Transverse colon (tissue), 4 donors: ENCODE measurements at regions of chr1 and their contacts with region 1.

Region 1: DNA sequence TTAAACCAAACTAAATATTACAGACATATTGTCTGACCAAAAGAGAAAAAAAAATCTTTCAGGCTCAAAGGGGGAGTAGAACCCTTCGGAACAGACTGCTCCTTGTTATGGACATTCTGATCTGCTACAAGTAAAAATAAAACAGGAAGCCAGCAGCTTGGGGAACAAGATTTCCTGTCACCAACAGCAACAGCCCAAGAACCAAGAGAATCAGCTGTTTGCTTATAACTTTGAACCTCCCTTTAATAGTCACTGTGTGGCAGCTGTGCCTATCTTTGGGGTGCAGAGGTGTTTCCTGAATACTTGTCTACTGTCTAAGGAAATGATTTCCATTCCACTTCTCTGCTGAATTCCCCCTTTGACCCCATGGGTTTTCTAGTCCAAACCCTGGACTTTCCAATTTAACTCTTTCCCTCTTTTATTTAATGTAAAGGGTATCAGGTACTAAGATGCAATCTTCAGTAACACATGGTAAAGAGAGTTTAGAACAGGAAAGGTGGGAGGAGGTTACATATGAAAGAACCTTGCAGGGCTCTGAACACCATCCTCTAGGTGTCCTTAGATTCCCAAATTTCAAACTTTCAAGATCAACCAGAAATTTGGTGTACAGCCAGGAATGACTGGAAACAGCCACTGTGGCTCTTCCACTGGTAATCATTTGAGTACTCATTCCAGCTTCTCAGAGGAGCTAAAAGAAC is 38.6 kb downstream of the GPR3 start:
- DNase-seq: no peak
- H3K4me3 ChIP-seq: peak overlapping the region in 1 of 4 donors; percentile 7
- H3K27ac ChIP-seq: peak overlapping the region; percentile 63 to 79 (median 74)
- H3K4me1 ChIP-seq: peaks cover 59 to 90% (median 64%) of the 10 kb centered on the region in 4 donors
- H3K27me3 ChIP-seq: no peaks in the 10 kb centered on the region
- CTCF ChIP-seq: no peak
- EP300 ChIP-seq: no peak
- POLR2A ChIP-seq: no peak

Region 2: DNA sequence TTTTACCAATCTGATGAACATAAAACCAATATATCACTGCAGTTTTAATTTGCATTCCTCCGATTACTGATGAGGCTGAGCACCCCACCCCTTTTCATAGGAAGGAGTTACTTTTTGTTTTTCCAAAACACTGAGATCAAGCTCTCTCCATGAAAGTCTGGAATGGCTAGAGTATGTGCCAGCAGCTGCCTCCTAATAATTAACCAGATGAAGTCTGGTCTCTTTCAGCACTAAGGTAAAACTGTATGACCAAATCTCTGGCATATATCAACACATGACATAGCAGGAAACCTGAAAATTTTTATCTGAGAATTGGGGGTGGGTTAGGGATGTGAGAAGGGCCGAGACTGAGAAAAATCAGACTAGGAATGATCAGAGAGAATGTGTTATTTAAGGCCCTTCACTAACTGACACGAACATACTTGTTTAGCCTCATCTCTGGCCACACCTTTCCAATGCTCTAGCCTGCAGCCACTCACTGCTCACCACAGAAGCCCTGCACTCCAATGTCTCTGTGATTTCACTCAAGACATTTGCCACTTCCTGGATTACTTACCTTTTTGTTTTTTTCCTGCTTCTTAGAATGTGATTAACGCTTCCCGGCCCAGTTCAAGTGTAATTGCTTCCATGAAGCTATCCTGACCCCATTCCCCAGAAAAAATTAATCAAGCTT is 24.2 kb after region 1 on chr1:
- in situ Hi-C with region 1: no loop called
- intact Hi-C with region 1: loop called (anchors 1 kb)
- DNase-seq: peak; percentile 18
- H3K4me3 ChIP-seq: no peak overlapping the region
- H3K27ac ChIP-seq: peak overlapping the region; percentile 13 to 31 (median 22)
- H3K4me1 ChIP-seq: peaks cover 8 to 46% (median 13%) of the 10 kb centered on the region in 4 donors
- H3K27me3 ChIP-seq: no peaks in the 10 kb centered on the region
- CTCF ChIP-seq: no peak
- EP300 ChIP-seq: no peak
- POLR2A ChIP-seq: no peak

Region 3: GRCh38 chr1:27556781-27557595 is 125.9 kb after region 1 on chr1:
- in situ Hi-C with region 1: no loop called
- intact Hi-C with region 1: no loop called
- DNase-seq: peak; percentile 92
- H3K4me3 ChIP-seq: peak overlapping the region in 2 of 4 donors; percentile 10 to 28
- H3K27ac ChIP-seq: peak overlapping the region; percentile 88 to 97 (median 90)
- H3K4me1 ChIP-seq: peaks cover 45 to 60% (median 54%) of the 10 kb centered on the region in 4 donors
- H3K27me3 ChIP-seq: no peaks in the 10 kb centered on the region
- CTCF ChIP-seq: peak; percentile 93 to 98 (median 94)
- EP300 ChIP-seq: no peak
- POLR2A ChIP-seq: no peak